H1 (cell line): ENCODE measurements at regions of chr15 and their contacts with region 1.

Region 1: DNA sequence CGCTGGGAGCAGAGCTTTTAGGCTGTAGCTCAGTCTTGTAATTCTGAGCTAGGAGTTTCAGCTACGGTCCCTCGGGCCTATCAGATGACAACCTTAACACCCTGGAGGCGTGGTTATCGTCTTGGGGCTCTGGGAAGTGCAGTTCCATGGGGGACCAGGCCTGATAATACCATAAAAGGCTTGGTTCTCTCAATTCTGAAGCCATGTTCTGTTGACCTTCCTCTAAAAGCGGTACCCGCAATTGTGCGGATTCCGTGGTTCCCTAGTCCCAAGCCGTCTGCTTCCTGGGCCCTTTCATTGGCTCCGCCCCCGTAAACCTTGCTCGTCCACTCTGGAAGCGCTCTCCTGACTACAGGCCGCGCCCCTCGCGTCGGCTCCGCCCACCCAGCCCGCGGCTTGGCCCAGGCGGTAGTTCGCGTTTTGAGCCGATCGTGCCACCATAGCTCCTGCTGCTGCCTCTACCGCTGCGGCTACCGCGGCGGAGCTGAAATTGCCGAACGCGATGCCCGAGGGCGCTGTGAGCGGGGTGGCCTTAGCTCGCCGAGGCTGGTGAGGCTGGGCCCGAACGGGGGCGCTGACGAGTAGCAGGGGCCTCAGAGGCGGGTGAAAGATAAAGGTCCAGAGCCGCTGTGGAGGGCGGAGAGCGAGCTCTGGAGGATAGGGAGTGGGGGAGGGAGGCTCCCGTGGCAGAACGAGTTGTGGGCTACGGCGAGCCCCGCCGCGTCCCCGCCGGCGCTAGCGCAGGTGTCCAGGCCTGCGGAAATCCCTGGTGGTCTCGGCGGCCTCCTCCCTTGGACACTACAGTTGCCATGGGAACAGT is at the start of gene MAPKBP1:
- DNase-seq: peak; percentile 97 to 98
- H3K4me3 ChIP-seq: peak within 1 kb of the TSS; percentile 71 to 78 (median 73)
- H3K27ac ChIP-seq: peak within 1 kb of the TSS; percentile 51; the same call in 1 of the 2 replicates
- H3K4me1 ChIP-seq: peaks cover 0 to 21% (median 10%) of the 10 kb centered on the region in 4 experiments; a peak in 5 of 7 replicates
- H3K27me3 ChIP-seq: no peaks in the 10 kb centered on the region
- CTCF ChIP-seq: peak; percentile 84 to 98 (median 87)
- EP300 ChIP-seq: peak in 1 of 2 experiments; percentile 42; a peak in 1 of 3 replicates
- POLR2A ChIP-seq: peak; percentile 56 to 60; a peak in 2 of 3 replicates
- RAD21 ChIP-seq: peak; percentile 63 to 69
- total RNA-seq, gene MAPKBP1: 10.9 and 11.3 TPM in 2 replicates

Region 2: GRCh38 chr15:41795996-41796856 is 22.0 kb after region 1 on chr15:
- CTCF ChIA-PET with region 1: interaction called, 283 read pairs
- POLR2A ChIA-PET with region 1: interaction called, 24 read pairs
- DNase-seq: no peak
- H3K4me3 ChIP-seq: no peak overlapping the region
- H3K27ac ChIP-seq: no peak overlapping the region; the same call in 1 of the 2 replicates
- H3K4me1 ChIP-seq: peaks cover 0 to 3% (median 2%) of the 10 kb centered on the region in 4 experiments; a peak in 4 of 7 replicates
- H3K27me3 ChIP-seq: no peaks in the 10 kb centered on the region
- CTCF ChIP-seq: no peak
- EP300 ChIP-seq: no peak
- POLR2A ChIP-seq: no peak
- RAD21 ChIP-seq: no peak

Region 3: DNA sequence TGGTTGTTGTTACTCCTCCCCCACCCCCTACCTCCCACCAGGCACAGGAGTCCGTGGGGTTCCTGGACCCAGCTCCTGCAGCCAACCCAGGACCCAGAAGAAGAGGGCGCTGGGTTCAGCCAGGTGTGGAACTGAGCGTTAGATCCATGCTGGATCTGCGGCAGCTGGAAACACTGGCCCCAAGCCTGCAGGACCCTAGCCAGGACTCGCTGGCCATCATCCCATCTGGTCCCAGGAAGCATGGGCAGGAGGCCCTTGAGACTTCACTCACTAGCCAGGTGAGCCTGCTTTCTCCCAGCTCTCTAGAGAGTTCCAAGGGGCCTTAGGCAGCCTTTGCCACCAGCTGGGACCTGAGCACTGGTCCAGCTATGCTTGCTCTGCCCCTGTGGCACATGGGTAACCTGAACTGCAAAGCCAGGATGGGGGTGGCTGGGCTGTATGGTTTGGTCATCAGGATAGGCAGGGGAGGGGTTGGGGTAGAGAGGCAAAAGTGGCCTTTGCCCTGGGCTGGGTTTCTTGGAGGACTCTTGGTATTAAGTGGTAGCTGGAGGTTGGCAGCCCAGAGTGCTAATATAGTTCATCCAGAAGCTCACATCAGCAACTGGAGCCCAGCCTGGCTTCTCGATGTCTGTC is 46.6 kb after region 1 on chr15:
- CTCF ChIA-PET with region 1: interaction called, 14 read pairs
- POLR2A ChIA-PET with region 1: interaction called, 5 read pairs
- DNase-seq: no peak
- H3K4me3 ChIP-seq: no peak overlapping the region
- H3K27ac ChIP-seq: no peak overlapping the region
- H3K4me1 ChIP-seq: no peaks in the 10 kb centered on the region; a peak in 1 of 7 replicates
- H3K27me3 ChIP-seq: no peaks in the 10 kb centered on the region
- CTCF ChIP-seq: no peak
- EP300 ChIP-seq: no peak
- POLR2A ChIP-seq: no peak
- RAD21 ChIP-seq: no peak

Region 4: GRCh38 chr15:41876689-41877088 is 102.4 kb after region 1 on chr15:
- CTCF ChIA-PET with region 1: interaction called, 22 read pairs
- POLR2A ChIA-PET with region 1: no interaction called
- DNase-seq: no peak
- H3K4me3 ChIP-seq: no peak overlapping the region
- H3K27ac ChIP-seq: no peak overlapping the region
- H3K4me1 ChIP-seq: peaks cover 0 to 5% (median under 1%) of the 10 kb centered on the region in 4 experiments; a peak in 3 of 7 replicates
- H3K27me3 ChIP-seq: peaks cover 11 to 17% (median 15%) of the 10 kb centered on the region in 4 experiments
- CTCF ChIP-seq: no peak
- EP300 ChIP-seq: no peak
- POLR2A ChIP-seq: no peak
- RAD21 ChIP-seq: no peak

Region 5: DNA sequence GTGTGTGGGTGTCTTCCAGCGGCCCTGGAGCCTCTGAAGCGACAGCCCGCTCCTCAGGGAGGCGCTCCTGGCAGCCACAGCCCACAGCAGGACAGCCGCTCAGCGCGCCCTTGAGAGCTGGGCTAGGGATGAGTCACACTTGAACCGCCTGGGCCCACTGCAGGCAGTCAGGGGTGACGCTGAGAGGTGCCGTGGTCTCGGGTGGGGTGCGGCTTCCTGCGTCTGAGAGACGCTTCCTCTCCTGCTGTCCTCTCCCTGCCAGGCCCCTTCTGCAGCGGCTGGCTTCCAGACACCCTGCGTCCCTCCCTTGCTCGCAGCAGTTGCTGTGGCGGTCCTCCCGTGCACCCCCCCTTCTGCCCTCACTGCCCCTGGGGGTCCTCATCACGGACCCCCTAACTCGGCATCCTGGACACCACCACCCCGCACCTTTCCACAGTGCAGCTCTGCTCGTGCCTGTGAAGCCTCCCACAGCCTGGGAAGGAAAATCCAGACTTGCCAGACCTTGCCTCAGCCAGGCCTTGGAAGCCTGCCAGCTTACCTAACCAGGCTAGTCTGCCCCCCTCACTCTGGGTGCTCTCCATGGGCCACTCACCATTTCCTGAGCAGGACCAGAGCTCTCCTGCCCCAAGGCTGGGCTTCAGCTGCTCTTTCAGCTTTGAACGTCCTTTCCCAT is 120.7 kb after region 1 on chr15:
- CTCF ChIA-PET with region 1: interaction called, 105 read pairs
- POLR2A ChIA-PET with region 1: no interaction called
- DNase-seq: peak in 1 of 2 experiments; percentile 57
- H3K4me3 ChIP-seq: no peak overlapping the region
- H3K27ac ChIP-seq: no peak overlapping the region
- H3K4me1 ChIP-seq: peaks cover 0 to 2% (median 0%) of the 10 kb centered on the region in 4 experiments; a peak in 1 of 7 replicates
- H3K27me3 ChIP-seq: no peaks in the 10 kb centered on the region; a peak in 1 of 7 replicates
- CTCF ChIP-seq: no peak
- EP300 ChIP-seq: no peak
- POLR2A ChIP-seq: no peak; a peak in 1 of 3 replicates
- RAD21 ChIP-seq: peak in 1 of 2 experiments; percentile 12; a peak in 1 of 4 replicates